ENCODE measurements at regions of chr12 and their contacts with region 1.

Region 1: DNA sequence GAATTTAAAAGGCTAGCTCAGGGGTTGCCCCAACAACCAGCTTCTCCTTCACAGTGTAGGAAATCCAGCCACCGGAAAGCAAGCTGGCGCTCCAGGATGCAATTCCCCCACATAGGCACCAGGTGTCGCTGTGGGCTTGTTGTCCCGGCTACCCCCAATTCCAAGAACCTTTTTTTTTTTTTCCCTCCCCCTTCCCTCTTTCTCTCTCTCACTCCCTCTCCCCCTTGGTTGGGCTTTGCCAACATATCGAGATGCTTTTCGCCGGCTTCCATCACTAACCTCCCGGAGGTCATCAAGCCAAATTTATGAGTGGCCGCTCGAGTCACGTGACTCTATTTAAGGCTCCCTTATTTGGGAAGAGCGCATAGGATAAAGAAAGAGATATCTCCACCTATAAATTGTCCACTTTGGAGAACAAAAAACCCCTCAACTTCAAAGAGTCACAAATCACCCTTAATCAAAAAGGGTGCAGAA is at the start of gene HOXC5:
- DNase-seq: peak; percentile 88
- H3K4me3 Mint-ChIP-seq: peak within 1 kb of the TSS; percentile 71
- H3K27ac Mint-ChIP-seq: no peak within 1 kb of the TSS
- H3K4me1 Mint-ChIP-seq: peaks cover 11% of the 10 kb centered on the region
- H3K27me3 Mint-ChIP-seq: no peaks in the 10 kb centered on the region
- CTCF ChIP-seq: peak; percentile 98
- total RNA-seq, gene HOXC5: 0.74 TPM in 1 of 2 replicates, not detected in the other

Region 2: GRCh38 chr12:53999559-54000104 is 33.0 kb before region 1 on chr12:
- CTCF ChIA-PET with region 1: interaction called, 7 read pairs
- POLR2A ChIA-PET with region 1: interaction called, 12 read pairs
- intact Hi-C with region 1: no loop called
- DNase-seq: peak; percentile 90
- H3K4me3 Mint-ChIP-seq: peak overlapping the region; percentile 89
- H3K27ac Mint-ChIP-seq: peak overlapping the region; percentile 97
- H3K4me1 Mint-ChIP-seq: peaks cover 12% of the 10 kb centered on the region
- H3K27me3 Mint-ChIP-seq: no peaks in the 10 kb centered on the region
- CTCF ChIP-seq: no peak

Region 3: GRCh38 chr12:54017878-54018467 is 14.7 kb before region 1 on chr12:
- CTCF ChIA-PET with region 1: interaction called, 40 read pairs
- POLR2A ChIA-PET with region 1: interaction called, 35 read pairs
- intact Hi-C with region 1: no loop called
- DNase-seq: peak; percentile 96
- H3K4me3 Mint-ChIP-seq: peak overlapping the region; percentile 98
- H3K27ac Mint-ChIP-seq: peak overlapping the region; percentile 98
- H3K4me1 Mint-ChIP-seq: peaks cover 23% of the 10 kb centered on the region
- H3K27me3 Mint-ChIP-seq: no peaks in the 10 kb centered on the region
- CTCF ChIP-seq: no peak

Region 4: GRCh38 chr12:54082397-54082892 is 49.8 kb after region 1 on chr12:
- CTCF ChIA-PET with region 1: no interaction called
- POLR2A ChIA-PET with region 1: no interaction called
- intact Hi-C with region 1: loop called (anchors 1 kb)
- DNase-seq: no peak
- H3K4me3 Mint-ChIP-seq: no peak overlapping the region
- H3K27ac Mint-ChIP-seq: no peak overlapping the region
- H3K4me1 Mint-ChIP-seq: no peaks in the 10 kb centered on the region
- H3K27me3 Mint-ChIP-seq: peaks cover 32% of the 10 kb centered on the region
- CTCF ChIP-seq: no peak

Region 5: GRCh38 chr12:54191550-54192022 is 158.9 kb after region 1 on chr12:
- CTCF ChIA-PET with region 1: interaction called, 233 read pairs
- POLR2A ChIA-PET with region 1: interaction called, 22 read pairs
- intact Hi-C with region 1: loop called (anchors 1 kb)
- DNase-seq: peak; percentile 87
- H3K4me3 Mint-ChIP-seq: no peak overlapping the region
- H3K27ac Mint-ChIP-seq: no peak overlapping the region
- H3K4me1 Mint-ChIP-seq: peaks cover 9% of the 10 kb centered on the region
- H3K27me3 Mint-ChIP-seq: no peaks in the 10 kb centered on the region
- CTCF ChIP-seq: peak; percentile 48

Region 6: GRCh38 chr12:54207484-54208294 is 175.0 kb after region 1 on chr12:
- CTCF ChIA-PET with region 1: interaction called, 233 read pairs
- POLR2A ChIA-PET with region 1: interaction called, 3 read pairs
- intact Hi-C with region 1: no loop called
- DNase-seq: peak; percentile 80
- H3K4me3 Mint-ChIP-seq: no peak overlapping the region
- H3K27ac Mint-ChIP-seq: no peak overlapping the region
- H3K4me1 Mint-ChIP-seq: peaks cover 6% of the 10 kb centered on the region
- H3K27me3 Mint-ChIP-seq: peaks cover 11% of the 10 kb centered on the region
- CTCF ChIP-seq: peak; percentile 90

Measured in MCF 10A (cell line).